ENCODE measurements at regions of chr4 and their contacts with region 1.

Region 1: DNA sequence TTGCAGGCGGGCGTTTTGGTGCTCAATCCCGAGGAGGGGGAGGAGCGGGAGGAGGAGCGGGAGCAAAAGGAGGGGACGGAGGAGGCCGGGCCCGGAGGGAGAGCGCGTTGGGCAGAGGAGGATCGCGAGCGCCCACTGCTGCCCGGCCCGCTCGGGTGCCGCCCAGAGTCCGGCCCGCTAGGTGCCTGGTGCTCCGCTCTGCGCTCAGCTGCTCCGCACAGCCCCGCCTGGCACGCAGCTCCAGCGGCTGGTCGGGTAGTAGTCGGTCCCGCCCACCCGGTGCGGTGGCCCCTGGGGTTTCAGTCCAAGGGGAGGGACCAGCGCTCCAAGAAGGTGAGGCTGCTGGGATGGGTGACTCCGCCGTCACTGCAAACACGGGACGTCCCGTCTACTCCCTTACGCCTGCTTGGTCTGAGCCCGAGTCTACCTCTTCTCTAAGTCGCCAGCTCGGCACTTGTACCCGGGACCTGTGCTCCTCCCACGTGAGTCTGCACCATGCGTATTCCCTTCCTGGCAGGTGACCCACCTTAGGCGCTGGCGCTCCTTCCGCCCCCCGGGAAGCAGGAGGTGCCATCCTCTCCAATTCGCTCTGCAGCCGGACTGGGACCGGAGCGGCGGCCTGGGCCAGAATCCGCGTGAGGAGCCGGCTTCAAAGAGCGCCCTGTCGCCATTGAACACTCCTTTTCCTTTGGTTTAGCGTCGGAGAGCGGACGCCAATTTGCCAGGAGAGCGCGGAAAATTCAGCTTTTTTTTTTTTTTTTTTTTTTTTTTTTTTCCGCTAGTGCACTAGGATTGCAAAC is 405 bp upstream of the HS3ST1 start:
- H3K4me3 Mint-ChIP-seq: peak overlapping the region; percentile 76
- H3K27ac Mint-ChIP-seq: peak overlapping the region; percentile 85
- H3K4me1 Mint-ChIP-seq: peaks cover 23% of the 10 kb centered on the region
- H3K27me3 Mint-ChIP-seq: peaks cover 55% of the 10 kb centered on the region

Region 2: GRCh38 chr4:10872833-10873517 is 556.1 kb before region 1 on chr4:
- intact Hi-C with region 1: no loop called
- H3K4me3 Mint-ChIP-seq: no peak overlapping the region
- H3K27ac Mint-ChIP-seq: no peak overlapping the region
- H3K4me1 Mint-ChIP-seq: no peaks in the 10 kb centered on the region
- H3K27me3 Mint-ChIP-seq: no peaks in the 10 kb centered on the region

Region 3: GRCh38 chr4:11338956-11339782 is 89.9 kb before region 1 on chr4:
- intact Hi-C with region 1: no loop called
- H3K4me3 Mint-ChIP-seq: no peak overlapping the region
- H3K27ac Mint-ChIP-seq: no peak overlapping the region
- H3K4me1 Mint-ChIP-seq: peaks cover 21% of the 10 kb centered on the region
- H3K27me3 Mint-ChIP-seq: no peaks in the 10 kb centered on the region

Region 4: DNA sequence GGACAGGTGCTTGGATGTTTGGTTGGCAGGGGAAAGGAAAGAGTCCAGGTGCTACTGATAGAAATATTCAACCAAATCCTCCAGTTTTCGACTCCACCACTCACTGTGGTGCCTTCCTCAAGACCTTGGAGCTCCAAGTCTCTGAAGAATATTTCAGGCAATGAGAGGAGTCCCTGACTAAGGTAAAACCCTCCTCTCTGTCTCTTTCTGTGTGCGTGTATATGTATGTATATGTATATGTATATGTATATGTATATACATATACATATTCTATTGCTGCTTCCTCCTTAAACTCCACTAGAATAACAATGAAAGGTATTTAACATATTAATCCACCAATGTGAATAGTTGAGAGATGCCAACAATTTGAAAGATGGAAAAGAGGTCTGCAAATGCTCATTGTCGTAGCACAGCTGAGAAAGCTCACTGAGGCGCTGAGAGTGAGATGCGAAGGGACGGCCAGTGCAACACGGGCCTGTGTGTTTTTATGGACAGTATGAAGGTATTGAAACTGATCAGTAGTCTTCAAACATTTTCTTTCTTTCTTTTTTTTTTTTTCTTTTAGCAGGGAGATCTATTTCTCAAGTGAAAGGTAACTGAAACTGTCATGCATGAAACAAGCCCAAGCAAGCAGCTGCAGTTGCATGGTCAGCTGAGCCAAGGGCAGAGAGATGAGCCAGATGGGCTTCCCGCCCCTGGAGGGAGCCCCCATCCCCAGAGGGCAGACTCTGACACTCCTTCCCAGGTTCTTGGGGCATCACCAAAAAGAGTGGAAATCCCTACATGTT is 40.7 kb after region 1 on chr4:
- intact Hi-C with region 1: loop called (anchors 5 kb)
- H3K4me3 Mint-ChIP-seq: no peak overlapping the region
- H3K27ac Mint-ChIP-seq: no peak overlapping the region
- H3K4me1 Mint-ChIP-seq: peaks cover 25% of the 10 kb centered on the region
- H3K27me3 Mint-ChIP-seq: no peaks in the 10 kb centered on the region